ENCODE measurements at regions of chr22 and their contacts with region 1.

Region 1: DNA sequence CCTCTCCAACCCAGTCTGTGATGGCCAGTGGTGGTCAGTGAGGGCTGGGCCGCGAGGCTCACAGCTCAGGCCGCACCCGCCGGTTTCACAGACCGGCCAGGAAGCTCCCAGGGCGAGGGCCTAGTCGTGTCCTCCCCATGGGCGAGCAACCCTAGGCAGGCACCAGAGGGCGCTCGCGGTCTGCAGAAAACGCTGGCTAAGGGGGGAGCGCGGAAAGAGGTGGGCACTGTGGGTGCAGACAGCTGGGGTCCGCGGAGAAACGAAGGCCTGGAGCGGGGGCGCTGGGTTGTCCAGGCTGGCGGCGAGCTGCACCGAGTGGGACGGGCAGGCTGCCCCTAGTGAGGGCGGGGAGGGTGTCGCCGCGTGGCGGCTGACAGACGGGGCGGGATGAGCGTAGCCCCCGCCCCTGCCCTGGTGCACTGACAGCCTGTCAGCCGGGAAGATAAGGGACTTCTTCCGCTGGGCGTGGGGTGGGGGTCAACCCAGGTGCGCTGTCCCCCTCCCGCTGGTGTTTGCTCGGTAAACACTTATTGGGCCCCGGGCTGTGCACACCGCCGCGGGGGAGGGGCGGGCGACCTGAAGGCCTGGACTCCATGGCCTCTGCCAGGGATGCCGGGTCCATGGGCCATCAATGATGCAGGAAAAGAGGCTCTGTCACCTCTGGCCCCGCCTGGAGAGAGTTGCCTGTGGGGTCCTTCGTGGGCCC is 7.5 kb downstream of the GP1BB start:
- DNase-seq: peak; percentile 67
- ATAC-seq: peak; percentile 97
- H3K4me3 ChIP-seq: peak overlapping the region; percentile 37
- H3K27ac ChIP-seq: no peak overlapping the region
- H3K4me1 ChIP-seq: no peaks in the 10 kb centered on the region; the same call in none of the 2 replicates
- H3K27me3 ChIP-seq: peaks cover 12% of the 10 kb centered on the region; the same call in 1 of the 2 replicates
- CTCF ChIP-seq: peak; percentile 97
- POLR2A ChIP-seq: no peak; the same call in 1 of the 2 replicates
- RAD21 ChIP-seq: peak; percentile 98

Region 2: DNA sequence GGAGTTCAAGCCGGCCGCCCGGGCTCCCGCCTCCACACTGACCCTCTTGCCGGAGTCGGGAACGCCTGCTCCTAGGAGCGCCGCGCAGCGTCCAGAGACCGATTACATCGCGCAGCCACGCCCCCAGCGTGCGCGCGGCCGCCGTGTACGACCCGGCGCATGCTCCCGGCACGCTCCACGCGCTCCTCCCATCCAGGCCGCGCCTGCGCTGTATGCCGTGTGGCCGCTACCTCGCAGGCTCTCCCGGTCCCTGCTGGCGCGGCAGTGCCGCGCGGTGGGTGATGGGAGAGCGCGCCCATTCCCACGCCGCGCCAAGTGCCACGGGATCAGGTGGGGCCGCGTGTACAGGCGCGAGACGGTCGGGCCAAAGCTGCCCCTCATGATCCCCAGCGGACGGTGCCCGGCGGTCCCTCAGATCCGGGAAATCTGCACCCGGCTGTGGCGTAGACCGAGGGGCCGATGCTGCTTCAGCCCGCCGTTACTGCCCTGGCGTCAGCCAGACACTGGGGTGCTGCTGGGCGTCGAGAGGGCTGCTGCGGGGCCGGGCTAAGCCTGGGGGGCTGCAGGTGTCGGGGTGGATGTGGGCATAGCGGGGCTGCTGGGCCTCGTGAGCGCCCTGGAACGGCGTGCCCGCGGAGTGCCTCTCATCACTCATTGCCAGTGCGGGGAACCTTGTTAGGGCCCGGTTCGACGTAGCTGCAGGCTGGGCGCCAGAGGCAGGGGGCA is 124.1 kb after region 1 on chr22 and contains the starts of genes GNB1L and RTL10:
- CTCF ChIA-PET with region 1: no interaction called
- POLR2A ChIA-PET with region 1: no interaction called
- dilution Hi-C with region 1: no loop called
- in situ Hi-C with region 1: no loop called
- intact Hi-C with region 1: loop called (anchors 5 kb)
- DNase-seq: peak; percentile 96
- ATAC-seq: peak; percentile 94
- H3K4me3 ChIP-seq: peak within 1 kb of the TSS; percentile 85
- H3K27ac ChIP-seq: peak within 1 kb of the TSS; percentile 81
- H3K4me1 ChIP-seq: peaks cover 16% of the 10 kb centered on the region
- H3K27me3 ChIP-seq: no peaks in the 10 kb centered on the region
- CTCF ChIP-seq: peak; percentile 27; the same call in 1 of the 2 replicates
- POLR2A ChIP-seq: peak; percentile 84
- RAD21 ChIP-seq: peak; percentile 29
- total RNA-seq, gene GNB1L: 1.7 and 2.5 TPM in 2 replicates
- total RNA-seq, gene RTL10: 8.6 TPM in 2 replicates

Region 3: DNA sequence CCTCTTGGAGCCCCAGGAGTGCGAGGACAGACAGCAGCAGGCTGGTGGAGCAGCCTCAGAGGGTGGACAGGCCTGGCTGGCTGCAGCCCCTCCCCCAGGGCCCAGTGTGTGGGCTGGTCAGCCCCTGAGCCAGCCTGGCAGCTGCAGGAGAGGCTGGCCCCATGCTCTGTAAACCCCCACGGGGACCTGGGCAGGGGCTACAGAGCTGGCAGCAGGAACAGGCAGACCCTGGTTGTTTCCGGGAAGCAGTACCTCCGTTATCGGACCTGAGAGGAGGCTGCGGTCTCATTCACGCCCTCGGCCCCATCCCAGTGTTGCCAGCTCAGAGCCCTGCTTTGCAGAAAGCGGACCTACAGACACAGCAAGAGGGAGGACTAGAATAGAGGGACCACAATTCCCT is 172.2 kb after region 1 on chr22:
- CTCF ChIA-PET with region 1: interaction called, 21 read pairs
- POLR2A ChIA-PET with region 1: interaction called, 4 read pairs
- dilution Hi-C with region 1: no loop called
- in situ Hi-C with region 1: no loop called
- intact Hi-C with region 1: no loop called
- DNase-seq: no peak
- ATAC-seq: peak; percentile 54
- H3K4me3 ChIP-seq: no peak overlapping the region
- H3K27ac ChIP-seq: no peak overlapping the region
- H3K4me1 ChIP-seq: peaks cover 7% of the 10 kb centered on the region
- H3K27me3 ChIP-seq: no peaks in the 10 kb centered on the region
- CTCF ChIP-seq: no peak
- POLR2A ChIP-seq: no peak
- RAD21 ChIP-seq: no peak

Region 4: GRCh38 chr22:19909350-19910179 is 178.8 kb after region 1 on chr22:
- CTCF ChIA-PET with region 1: interaction called, 27 read pairs
- POLR2A ChIA-PET with region 1: no interaction called
- dilution Hi-C with region 1: no loop called
- in situ Hi-C with region 1: loop called (anchors 5 kb)
- intact Hi-C with region 1: loop called (anchors 1 kb)
- DNase-seq: peak; percentile 73
- ATAC-seq: peak; percentile 99
- H3K4me3 ChIP-seq: no peak overlapping the region
- H3K27ac ChIP-seq: no peak overlapping the region
- H3K4me1 ChIP-seq: peaks cover 8% of the 10 kb centered on the region
- H3K27me3 ChIP-seq: no peaks in the 10 kb centered on the region
- CTCF ChIP-seq: peak; percentile 94
- POLR2A ChIP-seq: peak; percentile 39; the same call in 1 of the 2 replicates
- RAD21 ChIP-seq: peak; percentile 99

Region 5: GRCh38 chr22:20013382-20013871 is 282.6 kb after region 1 on chr22:
- CTCF ChIA-PET with region 1: no interaction called
- POLR2A ChIA-PET with region 1: no interaction called
- dilution Hi-C with region 1: no loop called
- in situ Hi-C with region 1: no loop called
- intact Hi-C with region 1: loop called (anchors 5 kb)
- DNase-seq: peak; percentile 47
- ATAC-seq: peak; percentile 64
- H3K4me3 ChIP-seq: no peak overlapping the region
- H3K27ac ChIP-seq: no peak overlapping the region
- H3K4me1 ChIP-seq: no peaks in the 10 kb centered on the region
- H3K27me3 ChIP-seq: peaks cover 32% of the 10 kb centered on the region
- CTCF ChIP-seq: peak; percentile 82
- POLR2A ChIP-seq: no peak
- RAD21 ChIP-seq: peak; percentile 89